ENCODE measurements at regions of chr12 and their contacts with region 1.

Region 1: DNA sequence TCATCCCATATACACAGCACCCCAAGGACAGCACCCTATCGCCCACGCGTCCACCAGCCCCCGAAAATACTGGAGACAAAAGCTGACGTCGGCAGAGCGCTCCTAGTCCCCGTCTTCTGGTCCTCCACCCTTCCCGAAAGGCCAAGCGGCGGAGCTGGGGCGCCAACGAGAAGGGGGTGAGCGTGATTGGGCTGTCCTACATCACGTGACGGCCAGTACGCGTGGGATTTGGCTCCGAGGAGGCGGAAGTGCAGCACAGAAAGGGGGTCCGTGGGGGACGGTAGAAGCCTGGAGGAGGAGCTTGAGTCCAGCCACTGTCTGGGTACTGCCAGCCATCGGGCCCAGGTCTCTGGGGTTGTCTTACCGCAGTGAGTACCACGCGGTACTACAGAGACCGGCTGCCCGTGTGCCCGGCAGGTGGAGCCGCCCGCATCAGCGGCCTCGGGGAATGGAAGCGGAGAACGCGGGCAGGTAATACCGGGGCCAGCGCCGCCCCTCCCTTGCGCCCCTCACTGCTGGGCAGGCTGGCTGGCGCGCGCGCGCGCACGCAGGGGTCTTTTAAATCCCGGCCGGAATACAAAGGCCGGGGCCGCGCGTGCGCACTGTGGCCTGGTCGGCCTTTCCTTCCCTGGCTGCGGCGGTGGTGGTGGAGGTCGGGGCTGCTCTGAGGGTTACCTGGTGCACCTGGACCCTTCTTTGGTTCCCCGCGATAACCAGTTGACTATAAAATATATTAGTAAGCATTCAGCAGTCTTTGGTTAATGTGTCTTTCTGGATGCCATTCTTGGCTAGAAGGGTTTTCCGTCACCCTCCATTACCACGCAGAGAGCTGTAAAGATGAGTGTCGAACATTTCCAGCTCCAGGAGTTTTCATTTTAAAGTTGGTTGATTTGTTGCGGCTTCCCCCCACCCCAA is at the start of gene TDG:
- DNase-seq: peak; percentile 99
- H3K4me3 Mint-ChIP-seq: peak within 1 kb of the TSS; percentile 96
- H3K27ac Mint-ChIP-seq: peak within 1 kb of the TSS; percentile 97
- H3K4me1 Mint-ChIP-seq: peaks cover 48% of the 10 kb centered on the region
- H3K27me3 Mint-ChIP-seq: no peaks in the 10 kb centered on the region
- total RNA-seq, gene TDG: 18.0 to 19.3 TPM

Region 2: DNA sequence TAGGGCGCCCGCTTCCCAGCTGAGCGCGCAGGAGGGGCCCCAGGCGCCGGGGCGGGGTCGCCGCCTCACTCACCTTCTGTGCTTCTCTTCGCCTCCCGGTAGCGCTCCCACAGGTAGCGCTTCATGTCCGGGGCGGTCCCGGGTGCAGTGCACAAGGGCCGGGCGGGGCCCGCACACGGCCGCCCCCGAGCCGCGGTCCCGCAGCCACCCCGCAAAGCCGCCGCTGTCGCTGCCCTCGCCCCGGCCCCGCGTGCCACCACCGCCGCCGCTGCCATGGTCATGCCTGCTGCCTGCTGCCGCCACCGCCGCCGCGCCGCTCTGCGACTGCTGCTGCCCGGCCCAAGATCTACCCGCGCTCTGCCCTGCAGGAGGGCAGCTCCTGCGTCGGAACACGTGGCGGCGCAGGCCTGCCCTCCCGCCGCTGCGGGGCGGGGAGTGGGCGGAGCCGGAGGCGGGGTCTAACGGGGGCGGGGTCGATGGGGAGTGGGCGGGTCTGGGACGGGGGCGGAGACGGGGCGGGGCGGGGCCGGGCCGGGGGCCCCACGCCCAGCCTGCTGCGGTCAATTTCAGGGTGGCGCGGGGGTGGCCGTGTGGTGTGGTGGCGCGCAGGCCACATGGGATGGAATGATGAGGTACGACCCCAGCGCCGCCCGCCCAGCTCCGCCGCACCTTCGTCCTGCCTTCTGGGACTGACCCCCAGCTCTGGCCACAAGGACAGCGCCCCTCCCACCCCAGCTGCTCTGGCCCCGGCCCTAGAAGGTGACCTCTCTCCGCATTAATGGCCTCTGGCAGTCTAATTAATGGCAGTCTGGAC is 124.8 kb before region 1 on chr12 and contains the start of gene NT5DC3:
- CTCF ChIA-PET with region 1: no interaction called
- intact Hi-C with region 1: loop called (anchors 2 kb)
- DNase-seq: peak; percentile 82
- H3K4me3 Mint-ChIP-seq: peak within 1 kb of the TSS; percentile 81
- H3K27ac Mint-ChIP-seq: no peak within 1 kb of the TSS
- H3K4me1 Mint-ChIP-seq: peaks cover 21% of the 10 kb centered on the region
- H3K27me3 Mint-ChIP-seq: no peaks in the 10 kb centered on the region
- total RNA-seq, gene NT5DC3: 6.0 to 6.4 TPM

Region 3: DNA sequence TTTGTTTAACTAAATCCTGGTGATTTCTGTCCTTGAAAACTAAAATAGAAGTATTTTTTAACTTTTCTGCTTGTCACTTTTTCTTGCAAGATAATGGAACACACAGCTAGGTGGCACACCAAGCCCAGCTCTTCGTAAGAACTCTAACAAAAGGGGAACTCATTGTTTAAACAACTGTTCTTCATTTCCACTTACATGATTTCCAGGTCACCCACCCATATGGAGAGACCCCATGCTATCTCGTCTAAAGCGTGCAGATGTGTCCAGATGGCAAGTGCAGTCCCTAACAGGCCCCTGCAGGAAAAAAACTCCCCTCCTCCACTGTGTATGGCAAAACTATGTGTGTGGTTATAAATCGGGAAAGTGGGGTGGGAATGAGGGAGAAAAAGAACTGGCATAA is 81.5 kb before region 1 on chr12:
- CTCF ChIA-PET with region 1: interaction called, 3 read pairs
- intact Hi-C with region 1: loop called (anchors 1 kb)
- DNase-seq: peak; percentile 75
- H3K4me3 Mint-ChIP-seq: no peak overlapping the region
- H3K27ac Mint-ChIP-seq: no peak overlapping the region
- H3K4me1 Mint-ChIP-seq: peaks cover 22% of the 10 kb centered on the region
- H3K27me3 Mint-ChIP-seq: no peaks in the 10 kb centered on the region

Region 4: DNA sequence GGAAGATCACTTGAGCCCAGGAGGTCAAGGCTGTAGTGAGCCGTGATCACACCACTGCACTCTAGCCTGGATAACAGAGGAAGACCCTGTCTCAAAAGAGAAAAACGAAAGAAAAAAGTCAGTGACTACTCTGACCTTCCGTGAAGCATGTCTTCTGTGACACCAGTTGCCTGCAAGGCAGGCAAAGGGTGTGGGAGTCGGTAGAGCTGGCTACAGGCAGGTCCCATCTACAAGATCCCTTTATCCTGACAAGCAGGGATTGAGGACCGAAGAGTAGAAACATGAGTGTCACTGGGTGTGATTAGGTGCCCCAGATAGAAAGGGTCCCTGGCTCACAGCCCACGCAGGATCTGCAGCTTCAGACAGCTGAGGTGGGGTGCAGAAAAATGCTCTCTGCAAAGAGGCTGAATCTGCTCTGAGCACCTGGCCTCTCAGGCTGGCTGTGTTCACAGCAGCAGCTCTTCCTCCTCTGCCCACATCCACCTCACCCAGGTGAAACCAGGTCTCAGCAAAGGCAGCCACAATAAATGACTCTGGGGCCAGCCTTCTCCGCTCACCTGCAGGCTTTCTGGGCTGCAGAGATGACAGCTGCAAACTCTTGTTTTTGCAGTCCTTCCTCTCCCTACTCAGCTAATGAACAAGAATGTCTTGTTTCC is 64.2 kb before region 1 on chr12:
- CTCF ChIA-PET with region 1: no interaction called
- intact Hi-C with region 1: loop called (anchors 1 kb)
- DNase-seq: peak; percentile 57
- H3K4me3 Mint-ChIP-seq: peak overlapping the region; percentile 49
- H3K27ac Mint-ChIP-seq: peak overlapping the region; percentile 41
- H3K4me1 Mint-ChIP-seq: peaks cover 58% of the 10 kb centered on the region
- H3K27me3 Mint-ChIP-seq: no peaks in the 10 kb centered on the region

Region 5: GRCh38 chr12:104064031-104064822 is 98.4 kb after region 1 on chr12 and contains the start of gene HCFC2:
- CTCF ChIA-PET with region 1: no interaction called
- intact Hi-C with region 1: loop called (anchors 1 kb)
- DNase-seq: peak; percentile 91
- H3K4me3 Mint-ChIP-seq: peak within 1 kb of the TSS; percentile 93
- H3K27ac Mint-ChIP-seq: peak within 1 kb of the TSS; percentile 84
- H3K4me1 Mint-ChIP-seq: peaks cover 16% of the 10 kb centered on the region
- H3K27me3 Mint-ChIP-seq: peaks cover 16% of the 10 kb centered on the region
- total RNA-seq, gene HCFC2: 7.4 to 8.3 TPM

Region 6: GRCh38 chr12:104137913-104138796 is 172.3 kb after region 1 on chr12 and contains the start of gene NFYB:
- CTCF ChIA-PET with region 1: no interaction called
- intact Hi-C with region 1: loop called (anchors 1 kb)
- DNase-seq: peak; percentile 95
- H3K4me3 Mint-ChIP-seq: peak within 1 kb of the TSS; percentile 84
- H3K27ac Mint-ChIP-seq: peak within 1 kb of the TSS; percentile 84
- H3K4me1 Mint-ChIP-seq: peaks cover 14% of the 10 kb centered on the region
- H3K27me3 Mint-ChIP-seq: no peaks in the 10 kb centered on the region
- total RNA-seq, gene NFYB: 23.3 to 28.3 TPM

Measured in activated naive CD4-positive, alpha-beta T cell treated with anti-CD3 and anti-CD28 coated beads for 36 hours (primary cell).